ENCODE measurements at regions of chr13 and their contacts with region 1.

Region 1: DNA sequence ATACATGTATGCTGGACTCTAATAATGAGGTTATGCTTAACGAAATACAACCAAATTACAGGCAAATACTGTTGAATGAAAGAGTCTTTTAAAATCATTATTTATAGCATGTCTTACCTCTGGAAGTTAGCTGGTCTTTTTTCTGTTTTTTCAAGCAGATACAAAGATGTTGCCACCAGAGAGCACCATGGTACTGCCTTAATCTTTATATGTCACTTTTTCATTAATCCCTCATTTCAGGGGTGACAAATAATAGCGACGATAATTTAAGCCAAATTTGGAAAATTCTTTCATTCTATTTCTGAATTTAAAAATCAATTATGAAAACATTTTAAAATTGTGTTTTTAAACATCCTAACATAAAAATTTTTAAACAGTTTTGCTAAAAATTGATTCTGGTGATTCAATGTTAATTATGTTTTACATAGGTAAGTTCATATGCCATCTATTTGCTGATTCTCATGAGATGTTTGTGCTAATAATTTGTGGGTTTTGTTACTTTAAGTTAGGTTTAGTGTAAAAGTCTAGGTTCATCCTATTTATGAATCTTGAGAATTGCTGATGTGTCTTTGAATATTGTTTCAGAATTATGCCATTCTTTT is 379.3 kb upstream of the SGCG start:
- DNase-seq: peak; percentile 33
- H3K4me3 ChIP-seq: no peak overlapping the region
- H3K27ac ChIP-seq: no peak overlapping the region
- H3K4me1 ChIP-seq: no peaks in the 10 kb centered on the region
- H3K27me3 ChIP-seq: no peaks in the 10 kb centered on the region
- CTCF ChIP-seq: peak; percentile 62

Region 2: GRCh38 chr13:21638319-21639282 is 1162.9 kb before region 1 on chr13:
- CTCF ChIA-PET with region 1: interaction called, 10 read pairs
- POLR2A ChIA-PET with region 1: no interaction called
- intact Hi-C with region 1: loop called (anchors 5 kb)
- DNase-seq: peak; percentile 35
- H3K4me3 ChIP-seq: no peak overlapping the region
- H3K27ac ChIP-seq: no peak overlapping the region
- H3K4me1 ChIP-seq: no peaks in the 10 kb centered on the region
- H3K27me3 ChIP-seq: peaks cover 7% of the 10 kb centered on the region
- CTCF ChIP-seq: peak; percentile 86

Region 3: GRCh38 chr13:22866221-22866620 is 64.7 kb after region 1 on chr13:
- CTCF ChIA-PET with region 1: no interaction called
- POLR2A ChIA-PET with region 1: no interaction called
- intact Hi-C with region 1: no loop called
- DNase-seq: no peak
- H3K4me3 ChIP-seq: no peak overlapping the region
- H3K27ac ChIP-seq: no peak overlapping the region
- H3K4me1 ChIP-seq: no peaks in the 10 kb centered on the region
- H3K27me3 ChIP-seq: no peaks in the 10 kb centered on the region
- CTCF ChIP-seq: no peak

Region 4: DNA sequence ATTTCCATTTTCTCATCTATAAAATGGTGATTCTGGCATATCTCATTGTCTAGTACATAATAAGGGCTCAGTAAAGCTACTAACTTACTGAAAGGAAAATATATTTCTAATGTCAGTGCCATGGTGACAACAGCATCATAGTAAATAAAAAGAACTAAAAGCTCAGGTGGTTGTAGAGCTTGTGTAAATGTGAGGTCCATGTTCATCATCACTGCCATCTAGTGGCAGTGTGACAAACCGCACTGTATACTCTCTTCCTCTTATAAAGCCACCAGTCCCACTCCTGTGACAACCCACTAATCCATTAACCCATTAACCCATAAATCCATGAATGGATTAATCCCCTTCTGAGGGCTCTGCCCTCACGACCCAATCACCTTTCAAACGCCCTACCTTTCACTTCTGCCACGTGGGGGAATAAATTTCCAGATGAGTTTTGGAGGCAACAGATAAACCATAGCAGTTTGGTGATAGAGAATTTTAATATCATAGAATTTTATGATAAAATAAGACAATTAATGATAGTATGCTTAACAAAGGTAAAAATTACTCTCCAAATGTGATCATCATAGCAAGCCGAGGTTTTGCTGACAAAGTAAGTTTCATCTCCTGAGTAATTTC is 218.8 kb after region 1 on chr13:
- CTCF ChIA-PET with region 1: interaction called, 12 read pairs
- POLR2A ChIA-PET with region 1: no interaction called
- intact Hi-C with region 1: loop called (anchors 1 kb)
- DNase-seq: peak; percentile 67
- H3K4me3 ChIP-seq: no peak overlapping the region
- H3K27ac ChIP-seq: no peak overlapping the region
- H3K4me1 ChIP-seq: no peaks in the 10 kb centered on the region
- H3K27me3 ChIP-seq: no peaks in the 10 kb centered on the region
- CTCF ChIP-seq: peak; percentile 86

Region 5: GRCh38 chr13:23087880-23088279 is 286.4 kb after region 1 on chr13:
- CTCF ChIA-PET with region 1: interaction called, 5 read pairs
- POLR2A ChIA-PET with region 1: no interaction called
- intact Hi-C with region 1: loop called (anchors 2 kb)
- DNase-seq: peak; percentile 48
- H3K4me3 ChIP-seq: no peak overlapping the region
- H3K27ac ChIP-seq: no peak overlapping the region
- H3K4me1 ChIP-seq: peaks cover 8% of the 10 kb centered on the region
- H3K27me3 ChIP-seq: peaks cover 9% of the 10 kb centered on the region
- CTCF ChIP-seq: peak; percentile 65

Region 6: DNA sequence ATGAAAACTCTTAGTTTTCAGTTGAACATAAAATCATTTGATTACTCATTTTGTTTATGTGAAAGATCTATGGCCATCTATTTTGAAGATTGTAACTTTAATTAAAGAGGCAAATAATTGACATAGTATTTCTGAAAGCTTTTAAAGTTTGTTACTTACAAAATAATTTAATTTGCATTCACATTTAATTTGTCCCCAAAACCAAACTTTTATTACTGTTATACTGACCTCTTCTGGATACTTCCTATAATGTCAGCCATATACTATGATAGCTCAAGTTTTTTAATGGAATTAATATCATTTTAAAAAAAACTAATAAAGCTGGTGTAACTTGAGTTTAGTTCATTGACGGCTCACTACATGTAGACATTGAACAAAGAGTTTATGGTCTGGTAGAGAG is 374.4 kb after region 1 on chr13:
- CTCF ChIA-PET with region 1: interaction called, 5 read pairs
- POLR2A ChIA-PET with region 1: no interaction called
- intact Hi-C with region 1: loop called (anchors 5 kb)
- DNase-seq: peak; percentile 7
- H3K4me3 ChIP-seq: no peak overlapping the region
- H3K27ac ChIP-seq: no peak overlapping the region
- H3K4me1 ChIP-seq: no peaks in the 10 kb centered on the region
- H3K27me3 ChIP-seq: no peaks in the 10 kb centered on the region
- CTCF ChIP-seq: peak; percentile 55

Region 7: DNA sequence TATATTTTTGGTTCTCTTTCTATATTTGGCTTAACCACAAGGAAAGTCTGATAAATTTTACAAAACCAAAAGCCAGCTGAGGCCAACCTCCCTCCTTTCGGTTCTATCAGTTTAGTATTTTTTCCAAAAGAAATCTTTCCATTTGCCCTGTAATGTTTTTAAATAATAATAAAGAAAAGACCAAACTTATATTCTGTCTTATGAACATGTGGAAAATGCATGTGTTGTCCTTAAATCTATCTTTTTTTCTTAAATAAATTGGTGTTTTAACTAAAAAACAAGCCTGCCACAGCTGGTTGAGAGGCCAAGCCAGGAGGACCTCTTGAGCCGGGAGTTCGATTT is 518.4 kb after region 1 on chr13:
- CTCF ChIA-PET with region 1: no interaction called
- POLR2A ChIA-PET with region 1: no interaction called
- intact Hi-C with region 1: loop called (anchors 2 kb)
- DNase-seq: no peak
- H3K4me3 ChIP-seq: no peak overlapping the region
- H3K27ac ChIP-seq: no peak overlapping the region
- H3K4me1 ChIP-seq: no peaks in the 10 kb centered on the region
- H3K27me3 ChIP-seq: no peaks in the 10 kb centered on the region
- CTCF ChIP-seq: no peak

Region 8: GRCh38 chr13:23899555-23899954 is 1098.1 kb after region 1 on chr13:
- CTCF ChIA-PET with region 1: interaction called, 13 read pairs
- POLR2A ChIA-PET with region 1: no interaction called
- intact Hi-C with region 1: no loop called
- DNase-seq: peak; percentile 47
- H3K4me3 ChIP-seq: no peak overlapping the region
- H3K27ac ChIP-seq: no peak overlapping the region
- H3K4me1 ChIP-seq: peaks cover 8% of the 10 kb centered on the region
- H3K27me3 ChIP-seq: peaks cover 9% of the 10 kb centered on the region
- CTCF ChIP-seq: peak; percentile 65